Panc1 (cell line): ENCODE measurements at regions of chr7 and their contacts with region 1.

Region 1: DNA sequence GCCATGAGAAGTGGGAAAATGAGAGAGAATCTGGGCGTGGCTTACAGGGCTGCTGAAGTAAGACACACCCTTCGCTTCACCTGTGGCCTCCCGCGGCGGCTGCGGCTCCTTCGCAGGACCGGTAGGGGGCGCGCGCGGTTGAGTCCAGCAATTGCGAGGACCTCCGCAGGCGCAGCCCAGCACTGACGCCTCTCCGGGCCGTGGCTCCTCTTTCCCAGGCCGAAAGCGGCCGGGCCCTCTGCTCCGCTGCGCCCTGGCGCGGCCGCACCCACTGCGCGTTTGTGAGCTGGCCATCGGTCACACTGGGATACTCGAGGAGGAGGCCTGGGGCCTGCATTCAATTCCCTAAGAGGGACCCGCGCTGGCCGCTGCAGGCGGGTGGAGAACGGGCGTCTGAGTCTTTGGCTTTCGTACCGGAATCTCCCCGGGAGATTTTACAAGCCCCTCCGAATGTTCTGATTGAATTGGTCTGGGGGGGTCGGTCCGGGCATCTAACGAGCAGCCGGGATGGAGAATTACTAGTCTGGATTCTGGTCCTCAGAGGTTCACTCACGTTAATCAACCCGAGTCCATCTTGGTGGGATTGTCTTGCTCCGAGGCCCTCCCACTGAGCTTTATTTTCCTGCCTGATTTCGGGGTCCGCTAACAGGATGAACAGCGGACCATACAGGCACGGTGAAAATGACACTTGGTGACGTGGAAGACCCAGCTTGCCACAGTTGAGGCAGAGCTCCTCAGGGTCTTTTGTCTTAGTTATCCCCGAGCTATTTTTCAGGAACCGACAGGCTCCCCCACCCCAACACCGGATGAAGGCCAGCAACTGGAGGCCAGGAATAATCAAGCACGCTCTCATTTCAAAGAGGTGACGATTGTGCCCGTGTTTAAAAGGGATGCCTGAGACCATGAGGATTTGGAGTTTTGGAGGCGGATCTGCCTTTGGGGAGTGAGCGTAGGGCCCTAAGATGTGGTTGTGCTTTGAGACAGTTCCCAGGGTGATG is at the start of gene LRRD1:
- DNase-seq: peak; percentile 53
- ATAC-seq: peak; percentile 98
- H3K4me3 ChIP-seq: peak within 1 kb of the TSS; percentile 47 to 71
- H3K27ac ChIP-seq: peak within 1 kb of the TSS; percentile 30; the same call in 1 of the 2 replicates
- H3K4me1 ChIP-seq: 0 out of 2 replicates have a peak, but pooled peaks cover 3% of the 10 kb centered on the region
- H3K27me3 ChIP-seq: 0 out of 2 replicates have a peak, but pooled peaks cover 2% of the 10 kb centered on the region
- CTCF ChIP-seq: peak; percentile 99
- total RNA-seq, gene LRRD1: 0.05 TPM

Region 2: DNA sequence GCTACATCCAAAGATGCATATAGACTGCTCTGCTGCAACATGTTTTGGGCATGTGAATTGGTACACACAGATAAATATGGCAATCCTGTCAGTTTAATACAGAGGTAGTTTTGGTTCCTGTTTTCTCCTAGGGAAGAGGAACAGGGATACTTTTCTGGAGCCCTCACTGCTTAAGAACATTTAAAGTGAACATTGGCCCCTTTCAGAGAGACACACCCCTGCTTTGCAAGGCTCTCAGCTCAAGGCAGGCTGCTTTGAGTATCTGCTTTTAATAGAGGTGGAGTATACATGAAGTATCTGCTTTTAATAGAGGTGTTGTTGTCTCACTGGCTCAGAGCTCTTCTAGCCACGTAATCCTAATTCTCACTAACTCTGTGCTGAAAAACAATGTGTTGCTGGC is 83.8 kb before region 1 on chr7:
- CTCF ChIA-PET with region 1: no interaction called
- POLR2A ChIA-PET with region 1: no interaction called
- in situ Hi-C with region 1: no loop called
- intact Hi-C with region 1: no loop called
- DNase-seq: no peak
- ATAC-seq: no peak
- H3K4me3 ChIP-seq: no peak overlapping the region
- H3K27ac ChIP-seq: no peak overlapping the region
- H3K4me1 ChIP-seq: no peaks in the 10 kb centered on the region
- H3K27me3 ChIP-seq: no peaks in the 10 kb centered on the region
- CTCF ChIP-seq: no peak

Region 3: GRCh38 chr7:92158660-92159575 is 20.3 kb before region 1 on chr7:
- CTCF ChIA-PET with region 1: interaction called, 13 read pairs
- POLR2A ChIA-PET with region 1: interaction called, 6 read pairs
- in situ Hi-C with region 1: no loop called
- intact Hi-C with region 1: no loop called
- DNase-seq: no peak
- ATAC-seq: no peak
- H3K4me3 ChIP-seq: no peak overlapping the region
- H3K27ac ChIP-seq: no peak overlapping the region
- H3K4me1 ChIP-seq: no peaks in the 10 kb centered on the region
- H3K27me3 ChIP-seq: peaks cover 22% of the 10 kb centered on the region
- CTCF ChIP-seq: no peak

Region 4: DNA sequence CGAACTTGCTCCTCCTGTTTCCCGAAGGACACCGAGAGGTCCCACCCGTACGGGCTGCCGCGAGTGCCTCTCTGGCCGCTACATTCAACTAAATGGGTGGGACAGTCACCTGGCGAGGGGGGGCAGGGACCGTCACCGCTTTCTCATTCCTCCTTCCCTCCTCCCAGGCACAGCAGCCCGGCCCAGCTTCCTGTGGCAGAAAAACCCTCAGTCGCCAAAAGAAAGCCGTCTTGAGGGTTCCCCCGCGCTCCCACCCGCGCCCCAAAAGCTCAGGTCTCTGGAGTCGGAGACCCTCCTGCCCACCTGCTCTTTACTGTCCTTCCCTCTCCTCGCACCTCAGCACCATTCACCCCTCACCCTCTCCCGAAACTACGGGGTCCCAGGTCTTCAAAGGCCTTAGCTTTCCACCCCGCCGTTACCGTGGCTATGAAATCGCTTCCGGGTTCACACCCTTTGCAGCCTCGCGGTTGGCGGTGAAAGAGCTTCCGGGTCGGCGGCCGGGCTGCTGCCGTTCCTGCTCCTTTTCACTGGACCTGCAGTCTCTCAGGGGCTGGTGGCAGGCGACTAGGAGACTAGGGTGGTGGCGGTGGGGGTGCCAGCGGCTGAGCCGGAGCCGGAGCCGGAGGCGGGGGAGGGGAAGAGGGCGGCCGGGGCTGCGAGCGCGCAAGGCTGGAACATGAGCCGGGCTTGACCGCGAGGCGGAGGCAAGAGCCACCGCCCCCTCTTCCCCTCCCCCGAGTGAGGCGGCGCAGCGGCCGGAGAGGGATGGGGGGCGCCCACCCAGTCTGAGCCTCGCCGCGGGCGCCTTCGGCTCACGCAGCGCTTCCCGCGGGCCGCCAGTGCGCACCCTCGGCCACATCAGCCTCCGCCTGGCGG is 66.5 kb after region 1 on chr7 and contains the starts of genes ANKIB1 and KRIT1:
- CTCF ChIA-PET with region 1: no interaction called
- POLR2A ChIA-PET with region 1: no interaction called
- in situ Hi-C with region 1: no loop called
- intact Hi-C with region 1: no loop called
- DNase-seq: peak; percentile 75
- ATAC-seq: peak; percentile 95
- H3K4me3 ChIP-seq: peak within 1 kb of the TSS; percentile 94
- H3K27ac ChIP-seq: peak within 1 kb of the TSS; percentile 94
- H3K4me1 ChIP-seq: peaks cover 17% of the 10 kb centered on the region
- H3K27me3 ChIP-seq: no peaks in the 10 kb centered on the region
- CTCF ChIP-seq: no peak
- total RNA-seq, gene ANKIB1: 83.8 TPM
- total RNA-seq, gene KRIT1: 50.1 TPM

Region 5: GRCh38 chr7:92461027-92462003 is 282.1 kb after region 1 on chr7:
- CTCF ChIA-PET with region 1: interaction called, 10 read pairs
- POLR2A ChIA-PET with region 1: no interaction called
- in situ Hi-C with region 1: no loop called
- intact Hi-C with region 1: no loop called
- DNase-seq: peak; percentile 33
- ATAC-seq: peak; percentile 90
- H3K4me3 ChIP-seq: no peak overlapping the region
- H3K27ac ChIP-seq: peak overlapping the region; percentile 15; the same call in 1 of the 2 replicates
- H3K4me1 ChIP-seq: peaks cover 3% of the 10 kb centered on the region; the same call in 1 of the 2 replicates
- H3K27me3 ChIP-seq: no peaks in the 10 kb centered on the region
- CTCF ChIP-seq: peak; percentile 92